K562 (cell line): ENCODE measurements at regions of chr3 and their contacts with region 1.

Region 1: GRCh38 chr3:72996473-72997333 is at the start of gene PPP4R2:
- DNase-seq: peak; percentile 79 to 91 (median 80)
- ATAC-seq: peak; percentile 88
- H3K4me3 ChIP-seq: peak within 1 kb of the TSS; percentile 85
- H3K27ac ChIP-seq: peak within 1 kb of the TSS; percentile 96
- H3K4me1 ChIP-seq: peaks cover 13 to 18% of the 10 kb centered on the region in 2 experiments; a peak in 4 of 5 replicates
- H3K27me3 ChIP-seq: no peaks in the 10 kb centered on the region
- CTCF ChIP-seq: no peak
- EP300 ChIP-seq: no peak
- POLR2A ChIP-seq: peak; percentile 71
- RAD21 ChIP-seq: no peak
- polyA plus RNA-seq, gene PPP4R2: 11.0 to 13.8 TPM

Region 2: DNA sequence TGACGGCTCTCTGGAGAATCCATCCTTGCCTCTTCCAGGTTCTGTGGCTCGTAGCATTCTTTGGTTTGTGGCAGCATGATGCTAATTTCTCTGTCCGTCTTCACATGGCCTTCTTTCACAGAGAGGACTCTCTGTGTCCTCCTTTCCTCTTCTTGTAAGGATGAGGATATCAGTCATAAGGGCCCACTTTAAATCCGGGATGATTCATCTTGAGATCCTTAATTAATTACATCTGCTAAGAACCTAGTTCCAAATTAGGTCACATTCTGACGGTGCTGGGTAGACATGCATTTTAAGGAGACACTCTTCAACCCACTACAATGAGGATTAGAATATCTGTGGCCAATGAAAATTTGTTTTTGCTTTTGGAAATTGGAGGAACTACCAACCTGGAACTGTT is 124.5 kb before region 1 on chr3:
- CTCF ChIA-PET with region 1: no interaction called
- POLR2A ChIA-PET with region 1: no interaction called
- in situ Hi-C with region 1: no loop called
- intact Hi-C with region 1: no loop called
- DNase-seq: no peak
- ATAC-seq: no peak
- H3K4me3 ChIP-seq: no peak overlapping the region
- H3K27ac ChIP-seq: no peak overlapping the region
- H3K4me1 ChIP-seq: no peaks in the 10 kb centered on the region; a peak in 1 of 5 replicates
- H3K27me3 ChIP-seq: no peaks in the 10 kb centered on the region
- CTCF ChIP-seq: no peak
- EP300 ChIP-seq: no peak
- POLR2A ChIP-seq: no peak
- RAD21 ChIP-seq: no peak

Region 3: GRCh38 chr3:72887705-72888545 is 108.8 kb before region 1 on chr3 and contains the start of gene GXYLT2:
- CTCF ChIA-PET with region 1: no interaction called
- POLR2A ChIA-PET with region 1: no interaction called
- in situ Hi-C with region 1: no loop called
- intact Hi-C with region 1: loop called (anchors 5 kb)
- DNase-seq: peak; percentile 62 to 76 (median 64)
- ATAC-seq: peak; percentile 85
- H3K4me3 ChIP-seq: peak within 1 kb of the TSS; percentile 48
- H3K27ac ChIP-seq: peak within 1 kb of the TSS; percentile 52; the same call in 2 of the 3 replicates
- H3K4me1 ChIP-seq: peaks cover 4 to 25% of the 10 kb centered on the region in 2 experiments; a peak in 3 of 5 replicates
- H3K27me3 ChIP-seq: no peaks in the 10 kb centered on the region
- CTCF ChIP-seq: peak in 2 of 3 experiments; percentile 29 to 34; a peak in 2 of 6 replicates
- EP300 ChIP-seq: no peak
- POLR2A ChIP-seq: no peak
- RAD21 ChIP-seq: peak in 1 of 2 experiments; percentile 14; a peak in 1 of 4 replicates
- polyA plus RNA-seq, gene GXYLT2: 0.71 to 1.4 TPM

Region 4: DNA sequence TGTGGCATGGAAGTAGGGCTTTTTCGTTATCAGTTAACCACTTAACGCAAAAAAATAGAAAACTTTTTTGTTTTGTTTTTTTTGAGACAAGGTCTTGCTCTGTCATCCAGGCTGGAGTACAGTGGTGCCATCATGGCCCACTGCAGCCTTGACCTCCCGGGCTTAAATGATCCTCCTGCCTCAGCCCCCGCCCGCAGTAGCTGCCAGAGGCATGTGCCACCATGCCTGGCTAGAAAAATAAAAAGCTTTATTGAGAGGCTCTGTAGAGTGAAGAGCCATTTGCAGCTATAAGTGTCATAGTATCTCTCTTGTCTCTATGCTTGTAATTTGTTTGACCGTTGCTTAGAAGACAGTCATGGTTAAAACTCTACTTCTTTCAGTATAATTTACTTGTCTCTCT is 13.5 kb after region 1 on chr3:
- CTCF ChIA-PET with region 1: no interaction called
- POLR2A ChIA-PET with region 1: interaction called, 12 read pairs
- in situ Hi-C with region 1: no loop called
- intact Hi-C with region 1: no loop called
- DNase-seq: no peak
- ATAC-seq: no peak
- H3K4me3 ChIP-seq: no peak overlapping the region
- H3K27ac ChIP-seq: no peak overlapping the region
- H3K4me1 ChIP-seq: no peaks in the 10 kb centered on the region; a peak in 2 of 5 replicates
- H3K27me3 ChIP-seq: no peaks in the 10 kb centered on the region
- CTCF ChIP-seq: no peak
- EP300 ChIP-seq: no peak
- POLR2A ChIP-seq: no peak
- RAD21 ChIP-seq: no peak

Region 5: GRCh38 chr3:73056014-73056844 is 59.5 kb after region 1 on chr3:
- CTCF ChIA-PET with region 1: no interaction called
- POLR2A ChIA-PET with region 1: no interaction called
- in situ Hi-C with region 1: no loop called
- intact Hi-C with region 1: loop called (anchors 5 kb)
- DNase-seq: peak in 1 of 4 experiments; percentile 37
- ATAC-seq: peak; percentile 58; the same call in 2 of the 3 replicates
- H3K4me3 ChIP-seq: no peak overlapping the region
- H3K27ac ChIP-seq: peak overlapping the region; percentile 19; the same call in 1 of the 3 replicates
- H3K4me1 ChIP-seq: no peaks in the 10 kb centered on the region
- H3K27me3 ChIP-seq: no peaks in the 10 kb centered on the region
- CTCF ChIP-seq: peak; percentile 25 to 57 (median 27); a peak in 3 of 6 replicates
- EP300 ChIP-seq: no peak
- POLR2A ChIP-seq: no peak
- RAD21 ChIP-seq: peak; percentile 53 to 63